ENCODE measurements at regions of chr2 and their contacts with region 1.

Region 1: DNA sequence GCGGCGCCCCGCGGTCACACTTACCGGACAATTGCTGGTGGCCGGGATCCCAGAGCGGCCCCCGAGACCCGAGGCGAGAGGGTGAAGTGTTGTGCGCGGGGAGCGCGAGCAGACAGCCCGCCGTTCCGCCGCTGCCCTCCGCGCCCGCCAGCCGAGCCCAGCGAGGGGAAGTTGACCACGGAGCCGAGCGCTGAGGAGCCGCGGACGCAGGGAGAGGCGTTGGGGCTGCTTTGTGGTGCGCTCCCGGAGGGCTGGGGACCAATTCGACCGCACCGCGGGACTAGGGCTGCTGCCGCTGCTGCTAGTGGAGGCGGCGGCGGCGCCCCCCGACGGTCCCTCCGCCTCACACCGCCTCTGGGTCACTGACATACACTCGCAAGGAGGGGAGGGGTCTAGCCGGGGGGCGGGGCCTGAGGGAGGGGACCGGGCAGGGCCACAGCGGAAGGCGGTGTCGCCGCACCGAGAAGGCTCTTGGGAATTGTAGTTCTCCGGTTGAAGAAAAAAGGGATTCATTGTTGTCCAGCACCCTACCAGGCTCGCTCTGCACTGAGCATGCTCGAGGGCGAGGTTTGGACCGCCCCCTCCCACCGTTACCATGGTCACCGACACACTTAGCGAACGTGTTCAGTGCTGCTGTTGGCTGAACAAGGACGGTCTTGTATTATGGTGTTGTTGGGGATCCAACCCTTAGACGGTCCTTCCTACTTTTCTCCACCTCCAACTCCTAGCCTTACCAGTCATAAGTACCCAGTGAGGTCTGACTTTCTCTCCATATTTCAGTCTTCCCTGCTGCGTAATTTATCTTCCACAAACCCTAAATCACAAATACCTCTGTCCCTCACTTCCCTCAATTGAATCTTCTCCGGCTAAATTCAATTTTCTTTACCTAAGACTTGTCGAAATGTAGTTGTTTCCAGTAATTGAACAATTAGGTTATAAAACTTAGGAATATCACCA is at the start of gene PELI1:
- DNase-seq: peak; percentile 95 to 99 (median 98)
- H3K4me3 ChIP-seq: peak within 1 kb of the TSS; percentile 67 to 99 (median 92)
- H3K27ac ChIP-seq: peak within 1 kb of the TSS; percentile 84 to 99 (median 98)
- H3K27me3 ChIP-seq: no peaks in the 10 kb centered on the region
- CTCF ChIP-seq: peak in 38 of 56 donors; percentile 9 to 63 (median 34)
- total RNA-seq, gene PELI1: 14.7 to 45.5 (median 26.9) TPM

Region 2: GRCh38 chr2:64018923-64019718 is 125.2 kb before region 1 on chr2 and contains the start of gene VPS54:
- intact Hi-C with region 1: loop called in 1 of 2 experiments (anchors 1 kb)
- DNase-seq: peak; percentile 43 to 85 (median 60)
- H3K4me3 ChIP-seq: peak within 1 kb of the TSS; percentile 38 to 88 (median 73)
- H3K27ac ChIP-seq: peak within 1 kb of the TSS; percentile 53 to 99 (median 93)
- H3K27me3 ChIP-seq: no peaks in the 10 kb centered on the region
- CTCF ChIP-seq: peak in 11 of 56 donors; percentile 1 to 47 (median 13)
- total RNA-seq, gene VPS54: 11.8 to 23.3 (median 17.3) TPM

Region 3: DNA sequence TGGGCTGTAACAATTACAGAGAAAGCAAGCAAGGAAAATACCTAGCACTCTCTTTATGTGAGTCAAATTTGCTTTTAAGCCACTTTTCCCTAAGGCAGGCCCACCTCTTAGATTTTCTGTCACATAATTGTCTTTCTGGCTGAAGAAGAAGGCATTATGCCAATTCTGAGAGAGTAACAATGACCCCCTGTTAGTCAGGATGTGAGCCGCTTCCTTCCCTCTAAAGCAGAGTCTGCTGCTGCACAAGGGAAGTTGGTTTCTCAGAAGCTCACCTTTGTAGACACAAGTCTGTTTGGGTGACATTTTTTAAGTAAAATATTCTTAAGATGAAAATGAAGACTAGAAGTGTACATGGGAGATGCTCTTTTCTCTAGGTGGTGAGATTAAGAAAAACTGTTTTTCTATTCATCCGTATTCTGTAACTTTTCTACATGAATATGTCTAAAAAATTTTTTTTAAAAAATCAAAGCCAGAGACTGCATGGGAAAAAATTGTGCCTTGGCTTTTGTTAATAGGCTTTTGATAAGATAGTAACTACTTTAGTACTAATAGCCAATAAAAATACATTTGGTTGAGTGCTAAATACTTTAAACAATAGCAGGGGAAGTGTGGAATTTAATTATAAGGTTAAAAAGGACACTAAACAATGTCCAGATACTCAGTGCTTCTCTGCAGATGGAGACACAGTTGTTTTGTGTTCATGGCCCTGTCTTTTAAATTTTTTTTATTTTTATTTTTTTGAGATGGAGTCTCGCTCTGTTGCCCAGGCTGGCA is 91.7 kb before region 1 on chr2:
- intact Hi-C with region 1: loop called (anchors 5 kb)
- DNase-seq: no peak
- H3K4me3 ChIP-seq: no peak overlapping the region
- H3K27ac ChIP-seq: peak overlapping the region in 8 of 59 donors; percentile 5 to 47 (median 19)
- H3K27me3 ChIP-seq: no peaks in the 10 kb centered on the region
- CTCF ChIP-seq: no peak

Region 4: GRCh38 chr2:64192125-64192479 is 47.8 kb after region 1 on chr2:
- intact Hi-C with region 1: loop called in 1 of 2 experiments (anchors 10 kb)
- DNase-seq: no peak
- H3K4me3 ChIP-seq: no peak overlapping the region
- H3K27ac ChIP-seq: peak overlapping the region in 10 of 59 donors; percentile 4 to 71 (median 35)
- H3K27me3 ChIP-seq: no peaks in the 10 kb centered on the region
- CTCF ChIP-seq: no peak

Region 5: DNA sequence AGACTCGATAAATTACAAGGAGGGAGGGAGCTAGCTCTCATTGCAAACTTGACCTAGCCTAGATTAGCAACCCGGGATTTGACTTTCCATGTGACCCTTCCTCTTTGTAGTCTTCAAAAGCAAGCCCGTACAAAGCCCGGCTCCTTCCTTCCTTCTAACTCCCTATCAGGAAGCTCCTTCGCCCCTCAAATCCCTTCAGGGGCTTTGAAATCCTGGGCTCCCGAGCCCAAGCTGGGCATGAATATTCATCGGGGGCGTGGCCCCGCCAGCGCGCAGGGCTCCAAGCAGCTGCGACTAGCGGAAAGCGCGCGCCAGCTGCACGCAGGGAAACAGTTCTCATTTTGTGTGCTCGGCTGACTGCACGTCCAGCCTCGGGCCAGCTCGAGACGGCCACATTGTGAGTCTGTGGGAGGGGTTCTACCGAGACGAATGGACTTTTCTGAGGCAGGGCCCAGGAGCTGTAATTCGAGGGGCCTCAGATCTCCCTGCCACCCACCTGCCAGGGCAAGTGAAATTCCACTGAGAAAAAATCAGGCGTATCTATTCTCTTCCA is 83.9 kb after region 1 on chr2:
- intact Hi-C with region 1: loop called (anchors 1 kb)
- DNase-seq: peak; percentile 65 to 93 (median 91)
- H3K4me3 ChIP-seq: peak overlapping the region; percentile 35 to 76 (median 62)
- H3K27ac ChIP-seq: peak overlapping the region; percentile 74 to 98 (median 94)
- H3K27me3 ChIP-seq: no peaks in the 10 kb centered on the region
- CTCF ChIP-seq: peak in 33 of 56 donors; percentile 11 to 59 (median 24)

Region 6: GRCh38 chr2:64243081-64244036 is 99.0 kb after region 1 on chr2:
- intact Hi-C with region 1: no loop called
- DNase-seq: no peak
- H3K4me3 ChIP-seq: no peak overlapping the region
- H3K27ac ChIP-seq: no peak overlapping the region
- H3K27me3 ChIP-seq: no peaks in the 10 kb centered on the region
- CTCF ChIP-seq: no peak

Region 7: GRCh38 chr2:64311948-64312621 is 167.8 kb after region 1 on chr2:
- intact Hi-C with region 1: loop called (anchors 5 kb)
- DNase-seq: peak; percentile 60 to 89 (median 80)
- H3K4me3 ChIP-seq: peak overlapping the region in 50 of 59 donors; percentile 1 to 56 (median 31)
- H3K27ac ChIP-seq: peak overlapping the region in 56 of 59 donors; percentile 8 to 89 (median 73)
- H3K27me3 ChIP-seq: no peaks in the 10 kb centered on the region
- CTCF ChIP-seq: peak in 55 of 56 donors; percentile 10 to 80 (median 62)

Region 8: GRCh38 chr2:64523666-64524603 is 379.6 kb after region 1 on chr2 and contains the start of gene AFTPH:
- intact Hi-C with region 1: loop called in 1 of 2 experiments (anchors 5 kb)
- DNase-seq: peak; percentile 97 to 99 (median 98)
- H3K4me3 ChIP-seq: peak within 1 kb of the TSS; percentile 64 to 99 (median 92)
- H3K27ac ChIP-seq: peak within 1 kb of the TSS; percentile 79 to 98 (median 94)
- H3K27me3 ChIP-seq: no peaks in the 10 kb centered on the region
- CTCF ChIP-seq: peak in 42 of 56 donors; percentile 5 to 61 (median 30)
- total RNA-seq, gene AFTPH: 26.7 to 61.2 (median 44.9) TPM